Heart right ventricle (tissue), 16 donors: ENCODE measurements at regions of chr11 and their contacts with region 1.

Region 1: DNA sequence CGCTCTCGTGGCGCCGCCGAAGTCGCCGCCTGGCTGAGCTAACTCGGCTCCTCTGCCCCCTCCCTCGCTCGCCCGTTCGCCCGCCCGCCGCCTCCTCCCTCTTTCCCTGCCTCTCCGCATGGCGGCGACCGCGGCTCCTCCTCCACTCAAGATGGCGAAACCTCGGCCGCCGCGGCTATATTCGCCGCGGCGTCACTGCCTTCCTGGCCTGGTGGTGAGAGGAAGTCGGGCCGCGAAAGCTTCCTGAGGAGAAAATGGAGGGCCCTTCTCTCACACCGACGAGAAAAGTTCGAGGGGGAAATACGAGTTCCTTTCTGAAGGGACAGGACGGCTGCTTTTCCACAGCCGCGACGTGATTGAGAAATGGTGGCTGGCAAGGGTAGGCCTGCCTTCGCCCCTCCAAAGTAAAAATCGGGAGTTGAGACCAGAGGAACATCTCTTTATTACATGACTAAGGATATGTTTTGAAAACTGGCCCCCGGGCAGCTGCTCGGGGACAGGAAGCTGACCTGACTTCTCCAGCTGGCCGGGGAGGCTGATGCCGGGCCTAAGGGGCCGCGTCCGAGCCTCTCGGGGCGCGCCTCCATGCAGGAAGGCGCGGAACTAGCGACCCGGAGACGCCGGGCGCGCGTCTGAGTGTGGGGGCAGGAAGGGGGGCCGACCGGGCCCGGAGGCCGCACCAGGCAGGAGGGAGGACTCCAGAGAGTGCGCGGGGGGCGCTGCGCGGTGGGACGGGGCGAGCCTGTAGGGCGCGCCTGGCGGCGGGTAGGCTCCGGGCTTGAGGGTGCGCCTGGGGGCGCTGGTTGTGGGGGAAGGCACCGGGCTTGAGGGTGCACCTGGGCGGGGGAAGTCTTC is at the start of gene DDX6:
- DNase-seq: peak; percentile 92 to 93
- ATAC-seq: peak; percentile 83 to 90 (median 88)
- H3K4me3 ChIP-seq: peak within 1 kb of the TSS; percentile 71 to 99 (median 92)
- H3K27ac ChIP-seq: peak within 1 kb of the TSS; percentile 96 to 100 (median 99)
- H3K4me1 ChIP-seq: peaks cover 3 to 46% (median 40%) of the 10 kb centered on the region in 9 donors
- H3K27me3 ChIP-seq: no peaks in the 10 kb centered on the region
- CTCF ChIP-seq: peak in 6 of 9 donors; percentile 34 to 52 (median 44)
- total RNA-seq, gene DDX6: 89.0 to 179 (median 136) TPM

Region 2: GRCh38 chr11:118572061-118572980 is 219.0 kb before region 1 on chr11 and contains the start of gene ARCN1:
- intact Hi-C with region 1: loop called in 1 of 10 experiments (anchors 10 kb)
- DNase-seq: peak; percentile 80 to 81
- ATAC-seq: peak; percentile 86 to 94 (median 90)
- H3K4me3 ChIP-seq: peak within 1 kb of the TSS; percentile 88 to 99 (median 97)
- H3K27ac ChIP-seq: peak within 1 kb of the TSS; percentile 90 to 100 (median 98)
- H3K4me1 ChIP-seq: peaks cover 7 to 53% (median 40%) of the 10 kb centered on the region in 9 donors
- H3K27me3 ChIP-seq: no peaks in the 10 kb centered on the region
- CTCF ChIP-seq: no peak
- total RNA-seq, gene ARCN1: 84.8 to 122 (median 98.3) TPM

Region 3: GRCh38 chr11:118610804-118611795 is 180.2 kb before region 1 on chr11:
- intact Hi-C with region 1: loop called in 1 of 10 experiments (anchors 5 kb)
- DNase-seq: peak; percentile 86
- ATAC-seq: peak; percentile 32 to 55 (median 47)
- H3K4me3 ChIP-seq: peak overlapping the region; percentile 60 to 97 (median 74)
- H3K27ac ChIP-seq: peak overlapping the region; percentile 91 to 99 (median 94)
- H3K4me1 ChIP-seq: peaks cover 3 to 81% (median 37%) of the 10 kb centered on the region in 9 donors
- H3K27me3 ChIP-seq: peaks cover 0 to 56% (median 0%) of the 10 kb centered on the region in 7 donors
- CTCF ChIP-seq: peak; percentile 88 to 98 (median 93)

Region 4: DNA sequence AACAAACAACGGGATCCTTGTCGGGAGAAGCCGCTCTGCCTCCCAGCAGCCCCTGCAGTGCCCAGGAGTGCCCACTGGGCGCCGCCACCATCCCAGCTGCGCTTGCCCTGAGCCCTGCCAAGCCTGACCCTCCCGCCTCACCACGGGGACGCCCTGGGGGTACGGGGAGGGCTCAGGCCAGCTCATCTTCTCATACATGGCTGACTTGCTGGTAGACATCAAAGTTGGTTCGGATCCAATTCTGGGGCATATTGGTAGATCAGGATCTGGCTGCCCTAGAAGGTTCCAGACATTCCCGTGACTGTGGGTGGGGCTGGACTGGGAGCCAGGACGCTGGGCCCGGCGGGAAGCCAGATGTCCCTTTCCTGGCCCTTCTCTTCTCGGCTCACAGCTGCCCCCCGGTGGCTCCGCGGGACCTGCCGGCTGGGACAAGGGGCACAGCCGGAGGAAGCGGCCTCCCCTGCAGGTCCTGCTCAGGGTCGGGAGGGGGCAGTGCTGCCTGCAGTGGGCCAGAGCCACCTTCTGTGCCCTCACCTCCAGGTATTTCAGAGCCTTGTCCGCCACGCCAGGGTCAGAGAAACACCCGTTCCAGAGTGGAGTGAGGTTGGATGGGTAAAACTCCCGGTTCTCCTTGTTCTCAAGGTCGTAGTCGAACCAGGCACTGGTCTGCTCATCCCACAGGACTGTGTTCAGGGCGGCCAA is 101.3 kb before region 1 on chr11:
- intact Hi-C with region 1: loop called in 4 of 10 experiments (anchors 2 to 10 kb)
- DNase-seq: peak; percentile 93 to 95
- ATAC-seq: peak; percentile 94 to 98 (median 96)
- H3K4me3 ChIP-seq: peak overlapping the region in 9 of 10 donors; percentile 29 to 55 (median 49)
- H3K27ac ChIP-seq: peak overlapping the region in 9 of 10 donors; percentile 14 to 81 (median 75)
- H3K4me1 ChIP-seq: peaks cover 0 to 29% (median 8%) of the 10 kb centered on the region in 9 donors
- H3K27me3 ChIP-seq: no peaks in the 10 kb centered on the region
- CTCF ChIP-seq: peak; percentile 70 to 91 (median 84)

Region 5: DNA sequence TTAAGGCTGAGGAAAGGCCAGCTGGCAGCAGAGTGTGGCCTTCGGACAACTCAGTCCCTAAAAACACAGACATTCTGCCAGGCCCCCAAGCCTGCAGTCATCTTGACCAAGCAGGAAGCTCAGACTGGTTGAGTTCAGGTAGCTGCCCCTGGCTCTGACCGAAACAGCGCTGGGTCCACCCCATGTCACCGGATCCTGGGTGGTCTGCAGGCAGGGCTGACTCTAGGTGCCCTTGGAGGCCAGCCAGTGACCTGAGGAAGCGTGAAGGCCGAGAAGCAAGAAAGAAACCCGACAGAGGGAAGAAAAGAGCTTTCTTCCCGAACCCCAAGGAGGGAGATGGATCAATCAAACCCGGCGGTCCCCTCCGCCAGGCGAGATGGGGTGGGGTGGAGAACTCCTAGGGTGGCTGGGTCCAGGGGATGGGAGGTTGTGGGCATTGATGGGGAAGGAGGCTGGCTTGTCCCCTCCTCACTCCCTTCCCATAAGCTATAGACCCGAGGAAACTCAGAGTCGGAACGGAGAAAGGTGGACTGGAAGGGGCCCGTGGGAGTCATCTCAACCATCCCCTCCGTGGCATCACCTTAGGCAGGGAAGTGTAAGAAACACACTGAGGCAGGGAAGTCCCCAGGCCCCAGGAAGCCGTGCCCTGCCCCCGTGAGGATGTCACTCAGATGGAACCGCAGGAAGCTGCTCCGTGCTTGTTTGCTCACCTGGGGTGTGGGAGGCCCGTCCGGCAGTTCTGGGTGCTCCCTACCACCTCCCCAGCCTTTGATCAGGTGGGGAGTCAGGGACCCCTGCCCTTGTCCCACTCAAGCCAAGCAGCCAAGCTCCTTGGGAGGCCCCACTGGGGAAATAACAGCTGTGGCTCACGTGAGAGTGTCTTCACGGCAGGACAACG is 104.1 kb after region 1 on chr11:
- intact Hi-C with region 1: loop called in 1 of 10 experiments (anchors 10 kb)
- DNase-seq: peak in 1 of 2 donors; percentile 3
- ATAC-seq: no peak
- H3K4me3 ChIP-seq: no peak overlapping the region
- H3K27ac ChIP-seq: peak overlapping the region in 1 of 10 donors; percentile 55
- H3K4me1 ChIP-seq: peaks cover 0 to 33% (median 0%) of the 10 kb centered on the region in 9 donors
- H3K27me3 ChIP-seq: no peaks in the 10 kb centered on the region
- CTCF ChIP-seq: no peak

Region 6: DNA sequence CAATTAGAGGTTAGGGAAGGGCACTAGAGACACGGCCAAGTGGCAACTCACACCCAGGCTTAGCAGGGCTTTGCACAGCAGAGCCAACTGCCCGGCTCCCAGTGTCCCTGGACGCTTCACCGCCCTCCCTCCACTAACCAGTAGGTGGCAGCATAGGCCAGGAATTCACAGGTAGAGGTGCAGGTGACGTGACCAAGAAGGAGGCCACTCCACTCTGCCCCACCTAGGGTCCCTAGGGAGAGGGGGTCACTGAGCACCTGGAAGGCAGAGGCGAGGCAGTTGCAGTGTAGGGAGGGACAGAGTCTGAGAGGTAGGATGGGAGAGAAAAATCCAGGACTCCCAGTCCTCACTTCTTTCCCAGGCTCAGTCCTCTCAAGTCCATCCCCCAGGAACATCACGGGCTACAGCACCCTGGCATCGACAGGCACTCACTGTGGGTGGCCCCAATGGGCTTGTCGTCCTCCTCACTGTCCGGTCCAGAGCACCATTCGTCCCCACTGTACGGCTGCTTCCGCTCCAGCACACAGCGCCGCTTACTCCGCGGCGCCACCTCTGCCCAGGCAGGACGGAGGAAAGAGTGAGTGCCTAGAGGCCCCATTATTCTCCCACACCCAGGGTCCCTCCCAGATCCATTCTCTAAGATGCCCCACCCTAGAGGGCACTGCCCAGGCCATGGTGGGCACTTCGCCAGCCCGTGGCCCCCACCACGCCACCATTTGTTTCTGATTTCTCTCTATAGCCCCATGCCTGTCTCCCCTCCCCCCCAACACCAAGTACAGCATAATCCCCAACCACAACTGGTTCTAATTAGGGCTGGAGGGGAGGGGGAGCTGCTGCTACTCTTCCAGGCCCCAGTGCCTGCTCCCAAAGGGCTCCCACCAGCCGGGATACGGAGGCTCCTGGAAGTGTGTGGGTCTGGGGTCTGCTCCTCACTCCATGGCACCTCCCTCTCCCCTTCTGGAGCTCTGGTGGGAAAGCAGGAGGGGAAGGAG is 116.0 kb after region 1 on chr11:
- intact Hi-C with region 1: loop called in 1 of 10 experiments (anchors 5 kb)
- DNase-seq: peak; percentile 81 to 89
- ATAC-seq: peak; percentile 34 to 70 (median 57)
- H3K4me3 ChIP-seq: no peak overlapping the region
- H3K27ac ChIP-seq: peak overlapping the region in 9 of 10 donors; percentile 20 to 98 (median 95)
- H3K4me1 ChIP-seq: peaks cover 33 to 67% (median 57%) of the 10 kb centered on the region in 9 donors
- H3K27me3 ChIP-seq: no peaks in the 10 kb centered on the region
- CTCF ChIP-seq: peak; percentile 73 to 96 (median 93)

Region 7: DNA sequence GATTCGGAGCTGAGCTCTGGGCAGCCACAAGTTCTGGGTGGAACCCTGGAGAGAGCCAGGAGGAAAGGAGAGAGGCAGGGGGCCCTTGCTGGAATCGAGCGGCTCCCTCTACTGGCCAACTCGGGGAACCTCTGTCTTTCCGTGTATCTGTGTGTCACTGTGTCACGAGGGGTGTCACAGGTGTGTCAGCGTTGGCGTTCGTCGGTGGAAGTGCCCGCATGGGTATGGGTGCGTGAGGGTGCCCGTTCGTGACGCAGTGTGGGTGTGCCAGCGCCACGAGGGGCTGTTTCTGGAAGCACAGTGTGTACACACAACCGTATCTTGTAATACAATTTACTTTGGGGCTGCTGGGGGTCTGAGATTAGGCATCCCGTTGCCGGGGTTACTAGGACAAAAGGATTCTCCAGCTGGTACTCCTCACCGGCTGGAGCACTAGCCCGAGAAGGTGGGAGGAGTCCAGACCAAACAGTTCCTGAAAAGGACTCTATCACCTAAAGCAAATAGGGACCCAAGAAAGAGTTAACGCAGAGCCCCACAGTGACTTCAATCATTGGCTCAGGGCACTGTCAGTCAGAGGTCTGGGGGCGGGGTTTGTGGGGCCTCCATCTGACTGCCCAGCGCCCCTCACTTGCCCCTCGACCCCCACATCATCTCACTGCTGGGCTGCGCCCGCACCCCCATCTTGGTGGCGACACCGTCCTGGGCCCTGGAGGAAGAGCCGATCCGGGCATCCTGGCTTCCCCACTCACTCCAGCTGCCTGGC is 137.0 kb after region 1 on chr11:
- intact Hi-C with region 1: loop called in 5 of 10 experiments (anchors 5 to 10 kb)
- DNase-seq: peak; percentile 89 to 94
- ATAC-seq: peak; percentile 73 to 86 (median 81)
- H3K4me3 ChIP-seq: peak overlapping the region; percentile 55 to 90 (median 76)
- H3K27ac ChIP-seq: peak overlapping the region; percentile 94 to 100 (median 97)
- H3K4me1 ChIP-seq: peaks cover 12 to 49% (median 37%) of the 10 kb centered on the region in 9 donors
- H3K27me3 ChIP-seq: no peaks in the 10 kb centered on the region
- CTCF ChIP-seq: peak; percentile 83 to 97 (median 94)